ENCODE measurements at regions of chr3 and their contacts with region 1.

Region 1: GRCh38 chr3:182683453-182683852 is 109.9 kb upstream of the ATP11B start:
- DNase-seq: peak; percentile 74
- H3K4me3 Mint-ChIP-seq: peak overlapping the region; percentile 48
- H3K27ac Mint-ChIP-seq: no peak overlapping the region
- H3K4me1 Mint-ChIP-seq: peaks cover 9% of the 10 kb centered on the region
- H3K27me3 Mint-ChIP-seq: peaks cover 23% of the 10 kb centered on the region

Region 2: DNA sequence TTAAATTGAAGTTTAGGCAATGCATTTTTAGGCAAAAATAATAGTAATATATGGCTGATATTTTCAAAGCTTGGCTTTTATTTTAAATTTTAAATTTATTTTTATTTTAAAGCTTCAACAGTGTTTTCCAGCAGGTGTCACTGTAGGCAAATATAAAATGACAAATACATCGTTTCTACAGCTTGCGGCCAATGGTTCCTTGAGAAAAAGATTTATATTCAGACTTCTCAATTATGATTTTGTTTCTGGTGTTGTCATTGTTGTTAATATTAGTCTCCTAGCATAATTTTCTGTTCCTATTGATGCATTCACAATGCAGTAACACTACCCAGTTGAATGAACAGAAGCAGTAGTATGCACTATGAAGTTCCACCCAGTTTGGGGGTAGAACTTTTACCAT is 1473.2 kb before region 1 on chr3:
- CTCF ChIA-PET with region 1: interaction called, 5 read pairs
- POLR2A ChIA-PET with region 1: no interaction called
- intact Hi-C with region 1: loop called (anchors 5 kb)
- DNase-seq: no peak
- H3K4me3 Mint-ChIP-seq: no peak overlapping the region
- H3K27ac Mint-ChIP-seq: no peak overlapping the region
- H3K4me1 Mint-ChIP-seq: no peaks in the 10 kb centered on the region
- H3K27me3 Mint-ChIP-seq: peaks cover 5% of the 10 kb centered on the region

Region 3: GRCh38 chr3:181326637-181327223 is 1356.7 kb before region 1 on chr3:
- CTCF ChIA-PET with region 1: interaction called, 6 read pairs
- POLR2A ChIA-PET with region 1: no interaction called
- intact Hi-C with region 1: loop called (anchors 1 kb)
- DNase-seq: no peak
- H3K4me3 Mint-ChIP-seq: no peak overlapping the region
- H3K27ac Mint-ChIP-seq: no peak overlapping the region
- H3K4me1 Mint-ChIP-seq: no peaks in the 10 kb centered on the region
- H3K27me3 Mint-ChIP-seq: no peaks in the 10 kb centered on the region

Region 4: GRCh38 chr3:181709537-181710279 is 973.7 kb before region 1 on chr3:
- CTCF ChIA-PET with region 1: interaction called, 18 read pairs
- POLR2A ChIA-PET with region 1: no interaction called
- intact Hi-C with region 1: loop called (anchors 1 kb)
- DNase-seq: peak; percentile 72
- H3K4me3 Mint-ChIP-seq: no peak overlapping the region
- H3K27ac Mint-ChIP-seq: peak overlapping the region; percentile 40
- H3K4me1 Mint-ChIP-seq: peaks cover 10% of the 10 kb centered on the region
- H3K27me3 Mint-ChIP-seq: peaks cover 53% of the 10 kb centered on the region

Region 5: DNA sequence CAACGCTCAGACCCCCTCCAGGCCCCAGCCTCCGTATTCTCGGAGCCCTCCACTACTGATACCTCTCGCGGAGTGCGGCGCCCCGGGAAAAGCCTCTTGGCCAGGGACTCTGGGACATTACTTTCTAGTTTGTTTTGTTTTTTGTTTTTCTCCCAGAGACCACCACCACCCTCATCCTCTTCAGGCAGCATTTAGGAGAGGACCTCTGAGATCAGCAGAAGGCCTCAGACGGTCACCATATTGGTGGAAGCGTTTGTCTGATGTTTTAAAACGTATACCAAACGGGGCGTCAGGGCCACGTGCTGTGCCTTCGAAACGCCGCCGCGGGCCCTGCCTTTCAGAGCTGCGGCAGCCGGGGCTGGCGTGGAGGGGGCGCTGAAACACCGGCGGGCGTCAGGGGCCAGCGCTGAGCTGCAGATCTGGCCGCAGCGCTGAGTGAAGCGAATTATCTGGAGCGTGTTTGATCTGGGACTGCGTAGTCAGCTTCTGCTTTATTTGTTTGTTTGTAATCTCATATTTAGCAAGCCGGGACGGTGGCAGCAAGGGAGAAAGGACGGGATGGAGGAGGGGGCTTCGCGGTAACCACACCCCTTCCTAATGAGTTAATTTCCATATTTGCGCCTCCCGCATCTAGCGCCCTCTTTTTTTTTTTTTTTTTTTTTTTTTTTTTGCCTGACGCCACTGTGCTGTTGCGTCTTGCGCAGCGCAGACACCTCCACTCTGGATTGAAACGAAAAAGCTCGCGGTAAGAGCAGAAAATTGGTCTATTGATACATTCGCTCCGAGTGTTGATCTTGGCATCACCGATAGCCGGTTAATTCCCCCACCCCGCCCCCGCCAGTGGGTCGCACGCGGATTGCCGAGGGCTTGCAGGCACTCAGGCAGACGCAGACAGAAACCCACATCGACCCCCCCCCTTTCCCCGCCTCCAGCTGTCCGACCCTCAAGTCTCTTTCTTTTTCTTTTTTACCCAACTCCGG is 956.8 kb before region 1 on chr3:
- CTCF ChIA-PET with region 1: interaction called, 10 read pairs
- POLR2A ChIA-PET with region 1: no interaction called
- intact Hi-C with region 1: no loop called
- DNase-seq: no peak
- H3K4me3 Mint-ChIP-seq: peak overlapping the region; percentile 41
- H3K27ac Mint-ChIP-seq: peak overlapping the region; percentile 33
- H3K4me1 Mint-ChIP-seq: peaks cover 15% of the 10 kb centered on the region
- H3K27me3 Mint-ChIP-seq: peaks cover 89% of the 10 kb centered on the region

Region 6: DNA sequence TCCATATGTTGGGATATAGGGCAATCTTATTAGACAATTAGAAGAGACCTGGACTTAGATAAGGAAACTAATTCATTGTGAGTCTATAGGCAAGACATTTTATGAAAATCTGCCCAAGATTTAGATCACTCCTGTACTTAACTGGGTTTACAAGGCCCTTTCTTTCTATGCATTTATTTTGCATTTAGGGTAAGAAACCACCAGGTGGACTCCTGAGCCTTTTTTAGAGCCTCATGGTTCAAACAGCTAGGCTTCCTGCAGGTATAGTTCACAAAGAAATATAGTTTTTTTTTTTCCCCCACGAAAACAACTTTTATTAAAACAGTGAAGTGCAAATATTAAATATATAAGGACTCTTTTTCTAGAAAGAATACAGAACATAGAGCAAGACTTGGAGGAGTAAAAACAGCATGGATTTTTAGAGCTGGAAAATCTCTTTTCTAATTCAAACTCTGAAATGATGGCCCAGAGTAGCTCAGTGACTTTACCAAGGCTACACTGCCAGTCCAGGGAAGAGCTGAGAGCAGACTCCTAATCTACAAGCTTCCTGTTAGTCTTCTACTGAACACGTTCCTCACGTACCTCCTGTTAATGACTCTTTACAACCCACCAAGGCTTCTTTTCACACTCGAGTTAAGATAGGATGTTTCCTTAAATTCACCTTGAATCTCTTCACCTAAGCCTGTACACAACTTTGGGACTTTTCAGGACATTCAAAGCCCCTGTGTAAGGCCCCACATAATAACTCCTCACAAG is 291.1 kb before region 1 on chr3:
- CTCF ChIA-PET with region 1: interaction called, 3 read pairs
- POLR2A ChIA-PET with region 1: no interaction called
- intact Hi-C with region 1: loop called (anchors 1 kb)
- DNase-seq: no peak
- H3K4me3 Mint-ChIP-seq: no peak overlapping the region
- H3K27ac Mint-ChIP-seq: no peak overlapping the region
- H3K4me1 Mint-ChIP-seq: no peaks in the 10 kb centered on the region
- H3K27me3 Mint-ChIP-seq: no peaks in the 10 kb centered on the region

Measured in activated CD4-positive, alpha-beta memory T cell treated with anti-CD3 and anti-CD28 coated beads for 36 hours (primary cell).